Breast epithelium (tissue), 4 donors: ENCODE measurements at regions of chr12 and their contacts with region 1.

Region 1: GRCh38 chr12:50718760-50719159 is 45.1 kb upstream of the ATF1 start:
- DNase-seq: no peak
- H3K4me3 ChIP-seq: no peak overlapping the region
- H3K27ac ChIP-seq: no peak overlapping the region
- H3K4me1 ChIP-seq: peaks cover 0 to 8% of the 10 kb centered on the region in 2 donors
- H3K27me3 ChIP-seq: no peaks in the 10 kb centered on the region
- CTCF ChIP-seq: no peak
- POLR2A ChIP-seq: no peak

Region 2: GRCh38 chr12:50699940-50700339 is 18.8 kb before region 1 on chr12:
- intact Hi-C with region 1: loop called (anchors 1 kb)
- DNase-seq: no peak
- H3K4me3 ChIP-seq: no peak overlapping the region
- H3K27ac ChIP-seq: no peak overlapping the region
- H3K4me1 ChIP-seq: no peaks in the 10 kb centered on the region
- H3K27me3 ChIP-seq: no peaks in the 10 kb centered on the region
- CTCF ChIP-seq: no peak
- POLR2A ChIP-seq: no peak